Lower lobe of right lung (tissue), 2 donors: ENCODE measurements at regions of chr14 and their contacts with region 1.

Region 1: GRCh38 chr14:67934008-67934481 is 114.5 kb downstream of the RAD51B start:
- DNase-seq: no peak
- ATAC-seq: peak; percentile 90 to 95
- H3K4me3 ChIP-seq: no peak overlapping the region
- H3K27ac ChIP-seq: no peak overlapping the region
- H3K4me1 ChIP-seq: peaks cover 7% of the 10 kb centered on the region
- H3K27me3 ChIP-seq: no peaks in the 10 kb centered on the region
- CTCF ChIP-seq: peak; percentile 78

Region 2: GRCh38 chr14:67653651-67654280 is 280.3 kb before region 1 on chr14:
- intact Hi-C with region 1: no loop called
- DNase-seq: no peak
- ATAC-seq: peak; percentile 11 to 39
- H3K4me3 ChIP-seq: no peak overlapping the region
- H3K27ac ChIP-seq: no peak overlapping the region
- H3K4me1 ChIP-seq: no peaks in the 10 kb centered on the region
- H3K27me3 ChIP-seq: no peaks in the 10 kb centered on the region
- CTCF ChIP-seq: no peak

Region 3: DNA sequence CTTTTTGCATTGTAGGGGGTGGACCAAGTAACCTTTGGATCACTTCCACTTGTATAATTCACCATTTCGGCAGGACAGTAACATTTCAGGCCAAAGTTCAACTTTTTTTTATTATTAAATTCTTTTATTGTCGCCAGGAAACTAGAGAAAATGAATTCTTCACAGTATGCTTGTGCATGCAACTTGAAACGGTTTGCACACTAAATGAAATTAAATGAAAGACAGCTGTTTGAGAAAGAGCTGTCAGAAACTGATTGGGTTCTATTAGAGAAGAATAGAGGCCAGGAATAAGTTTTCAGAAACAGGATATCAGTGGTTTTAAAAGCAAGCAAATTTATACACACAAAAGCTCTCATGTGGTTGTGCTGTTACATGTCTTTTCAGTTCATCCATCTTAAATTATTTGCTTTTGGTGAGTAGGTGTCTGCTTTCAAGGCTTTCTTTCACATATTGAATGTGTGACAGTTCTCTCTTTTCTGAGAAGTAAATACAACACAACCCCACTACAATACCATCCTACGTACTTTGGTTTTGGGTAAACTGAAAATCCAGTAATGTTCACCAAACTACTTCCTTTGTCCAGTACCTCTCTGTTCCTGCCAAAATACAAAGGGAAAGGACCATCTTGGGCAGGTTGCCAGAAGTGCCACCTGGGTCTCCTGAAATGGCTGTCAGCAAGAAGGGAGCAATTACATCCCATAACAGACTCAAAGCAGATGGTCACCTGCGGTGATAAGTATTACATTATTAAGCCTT is 177.2 kb after region 1 on chr14:
- intact Hi-C with region 1: no loop called
- DNase-seq: no peak
- ATAC-seq: no peak
- H3K4me3 ChIP-seq: no peak overlapping the region
- H3K27ac ChIP-seq: no peak overlapping the region
- H3K4me1 ChIP-seq: peaks cover 23% of the 10 kb centered on the region
- H3K27me3 ChIP-seq: no peaks in the 10 kb centered on the region
- CTCF ChIP-seq: no peak

Region 4: DNA sequence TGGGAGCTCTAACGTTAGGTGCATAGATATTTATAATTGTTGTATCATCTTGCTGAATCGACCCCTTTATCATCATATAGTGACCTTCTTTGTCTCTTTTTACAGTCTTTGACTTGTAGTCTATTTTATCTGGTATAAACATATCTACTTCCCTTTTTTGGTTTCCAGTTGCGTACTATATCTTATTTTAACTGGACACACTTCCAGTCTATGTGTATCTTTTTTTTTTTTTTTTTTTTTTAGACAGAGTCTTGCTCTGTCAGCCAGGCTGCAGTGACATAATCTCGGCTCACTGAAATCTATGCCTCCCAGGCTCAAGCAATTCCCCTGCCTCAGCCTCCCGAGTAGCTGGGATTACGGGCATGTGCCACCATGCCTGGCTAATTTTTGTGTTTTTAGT is 900.8 kb after region 1 on chr14:
- intact Hi-C with region 1: loop called (anchors 10 kb)
- DNase-seq: no peak
- ATAC-seq: no peak
- H3K4me3 ChIP-seq: no peak overlapping the region
- H3K27ac ChIP-seq: no peak overlapping the region
- H3K4me1 ChIP-seq: no peaks in the 10 kb centered on the region
- H3K27me3 ChIP-seq: no peaks in the 10 kb centered on the region
- CTCF ChIP-seq: no peak

Region 5: DNA sequence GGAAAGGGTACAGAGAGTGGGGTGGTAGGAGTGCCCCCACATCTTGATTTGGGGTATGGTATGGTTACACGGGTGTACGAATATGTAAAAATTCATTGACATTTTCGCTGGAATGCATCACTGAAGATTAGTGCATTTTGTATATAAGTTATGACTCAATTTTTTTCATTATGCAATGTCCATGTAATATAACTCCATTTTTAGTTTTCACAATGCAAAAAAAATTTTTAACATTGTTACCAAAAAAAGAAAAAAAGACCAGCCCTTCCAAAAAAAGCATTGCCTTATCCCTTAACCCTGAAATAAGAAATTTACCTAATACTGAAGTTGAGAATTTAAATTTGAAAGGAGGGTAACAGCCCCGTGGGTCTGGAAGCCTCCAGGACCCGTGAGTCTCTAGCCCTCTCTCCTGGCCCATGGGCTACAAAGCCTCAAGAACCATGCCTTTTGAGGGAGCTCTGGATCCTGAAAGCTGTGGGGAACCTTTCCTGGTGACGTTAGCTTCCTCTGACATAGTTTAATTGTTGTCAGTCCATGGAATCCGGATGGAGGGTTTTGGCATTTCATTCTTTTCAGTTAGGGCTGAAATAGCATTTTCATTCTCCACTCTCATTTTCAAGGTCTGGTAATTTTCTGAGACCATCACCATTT is 1100.7 kb after region 1 on chr14:
- intact Hi-C with region 1: no loop called
- DNase-seq: no peak
- ATAC-seq: no peak
- H3K4me3 ChIP-seq: no peak overlapping the region
- H3K27ac ChIP-seq: no peak overlapping the region
- H3K4me1 ChIP-seq: no peaks in the 10 kb centered on the region
- H3K27me3 ChIP-seq: no peaks in the 10 kb centered on the region
- CTCF ChIP-seq: no peak